ENCODE measurements at regions of chr1 and their contacts with region 1.

Region 1: GRCh38 chr1:39522661-39523567 is 31.5 kb downstream of the BMP8A start:
- DNase-seq: peak in 2 of 4 experiments; percentile 5 to 7
- ATAC-seq: no peak
- H3K4me3 ChIP-seq: no peak overlapping the region
- H3K27ac ChIP-seq: no peak overlapping the region
- H3K4me1 ChIP-seq: peaks cover 0 to 26% of the 10 kb centered on the region in 2 experiments; a peak in 3 of 5 replicates
- H3K27me3 ChIP-seq: no peaks in the 10 kb centered on the region
- CTCF ChIP-seq: no peak
- EP300 ChIP-seq: no peak
- POLR2A ChIP-seq: no peak
- RAD21 ChIP-seq: no peak

Region 2: DNA sequence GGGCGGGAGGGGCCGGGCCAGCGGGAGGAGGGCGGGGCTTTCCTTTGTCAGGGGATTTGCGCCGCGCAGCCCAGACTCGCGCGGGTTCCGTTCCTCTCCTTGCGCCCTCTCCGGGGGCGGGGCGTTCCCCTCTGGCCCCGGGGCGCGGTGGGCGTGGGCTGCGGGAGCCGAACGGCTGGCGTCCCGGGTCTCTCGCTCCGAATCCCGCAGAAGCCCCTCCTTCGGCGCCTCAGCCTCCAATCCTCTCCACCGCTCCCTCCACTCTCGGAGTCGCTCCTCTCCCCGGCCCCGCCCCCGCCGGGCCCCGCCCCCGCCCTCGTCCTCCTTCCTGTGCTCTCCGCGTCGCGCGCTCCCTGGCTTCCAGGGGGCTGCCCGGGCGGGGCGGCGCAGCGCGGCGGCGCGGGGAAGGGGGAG is 114.3 kb before region 1 on chr1:
- CTCF ChIA-PET with region 1: no interaction called
- POLR2A ChIA-PET with region 1: no interaction called
- in situ Hi-C with region 1: no loop called
- intact Hi-C with region 1: no loop called
- DNase-seq: peak; percentile 97 to 99 (median 98)
- ATAC-seq: peak; percentile 91
- H3K4me3 ChIP-seq: peak overlapping the region; percentile 81
- H3K27ac ChIP-seq: peak overlapping the region; percentile 73
- H3K4me1 ChIP-seq: peaks cover 21 to 36% of the 10 kb centered on the region in 2 experiments; a peak in 4 of 5 replicates
- H3K27me3 ChIP-seq: no peaks in the 10 kb centered on the region
- CTCF ChIP-seq: no peak
- EP300 ChIP-seq: no peak
- POLR2A ChIP-seq: no peak
- RAD21 ChIP-seq: no peak

Region 3: DNA sequence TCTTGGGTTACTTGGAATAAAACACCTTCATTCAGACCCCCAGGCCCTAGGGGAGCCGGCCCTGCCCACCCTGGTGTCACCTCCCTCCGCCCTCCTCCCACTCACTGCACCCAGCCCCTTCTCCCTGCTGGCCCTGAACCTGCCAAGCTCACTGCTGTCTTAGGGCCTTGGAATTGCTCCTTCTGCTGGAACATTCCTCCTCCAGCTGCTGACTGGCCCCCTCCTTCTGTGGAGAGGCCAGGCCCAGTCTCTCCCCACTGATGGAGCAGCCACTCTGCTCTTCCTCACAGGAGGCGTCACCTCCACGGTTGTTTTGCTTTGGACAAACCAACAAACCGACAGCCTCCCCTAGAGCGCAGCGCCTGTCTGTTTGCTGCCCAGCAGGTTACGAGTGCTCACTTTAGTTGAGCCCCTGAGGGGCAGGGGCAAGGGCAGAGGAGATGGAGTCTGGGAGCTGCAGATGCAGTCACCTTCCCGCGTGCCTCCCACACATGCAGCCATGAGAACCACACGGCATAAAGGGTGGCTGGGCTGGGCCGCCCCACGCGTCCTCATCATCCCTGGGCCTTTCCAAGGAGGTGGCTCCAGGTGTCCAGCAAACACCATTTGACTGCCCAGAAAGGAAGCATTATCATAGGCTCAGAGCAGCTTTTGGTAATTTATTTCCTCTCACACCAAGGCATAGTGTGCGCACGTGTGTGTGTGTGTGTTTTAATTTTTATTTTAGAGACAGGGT is 238.8 kb after region 1 on chr1:
- CTCF ChIA-PET with region 1: no interaction called
- POLR2A ChIA-PET with region 1: interaction called, 4 read pairs
- in situ Hi-C with region 1: loop called (anchors 5 kb)
- intact Hi-C with region 1: loop called (anchors 5 kb)
- DNase-seq: no peak
- ATAC-seq: no peak
- H3K4me3 ChIP-seq: no peak overlapping the region
- H3K27ac ChIP-seq: no peak overlapping the region
- H3K4me1 ChIP-seq: peaks cover 3 to 18% of the 10 kb centered on the region in 2 experiments; a peak in 3 of 5 replicates
- H3K27me3 ChIP-seq: no peaks in the 10 kb centered on the region
- CTCF ChIP-seq: no peak
- EP300 ChIP-seq: no peak
- POLR2A ChIP-seq: no peak
- RAD21 ChIP-seq: no peak

Measured in K562 (cell line).